Activated CD4-positive, alpha-beta T cell treated with anti-CD3 and anti-CD28 coated beads, Interleukin-2, amount 10 ng/mL, durations not matched to agents 7 days and 5 days (primary cell): ENCODE measurements at regions of chr1 and their contacts with region 1.

Region 1: GRCh38 chr1:212477014-212477679 is 44.4 kb downstream of the NENF start:
- DNase-seq: peak; percentile 85
- H3K4me3 Mint-ChIP-seq: no peak overlapping the region
- H3K27ac Mint-ChIP-seq: peak overlapping the region; percentile 15
- H3K4me1 Mint-ChIP-seq: peaks cover 25% of the 10 kb centered on the region
- H3K27me3 Mint-ChIP-seq: peaks cover 25% of the 10 kb centered on the region

Region 2: GRCh38 chr1:212488397-212489283 is 11.5 kb after region 1 on chr1:
- CTCF ChIA-PET with region 1: interaction called, 20 read pairs
- POLR2A ChIA-PET with region 1: no interaction called
- DNase-seq: no peak
- H3K4me3 Mint-ChIP-seq: no peak overlapping the region
- H3K27ac Mint-ChIP-seq: no peak overlapping the region
- H3K4me1 Mint-ChIP-seq: no peaks in the 10 kb centered on the region
- H3K27me3 Mint-ChIP-seq: peaks cover 2% of the 10 kb centered on the region